AG04450 (cell line): ENCODE measurements at regions of chr17 and their contacts with region 1.

Region 1: GRCh38 chr17:42405963-42406495 is 17.0 kb downstream of the CAVIN1 start:
- DNase-seq: no peak
- H3K4me3 ChIP-seq: no peak overlapping the region
- H3K27ac ChIP-seq: no peak overlapping the region
- H3K27me3 ChIP-seq: no peaks in the 10 kb centered on the region
- CTCF ChIP-seq: peak; percentile 74

Region 2: DNA sequence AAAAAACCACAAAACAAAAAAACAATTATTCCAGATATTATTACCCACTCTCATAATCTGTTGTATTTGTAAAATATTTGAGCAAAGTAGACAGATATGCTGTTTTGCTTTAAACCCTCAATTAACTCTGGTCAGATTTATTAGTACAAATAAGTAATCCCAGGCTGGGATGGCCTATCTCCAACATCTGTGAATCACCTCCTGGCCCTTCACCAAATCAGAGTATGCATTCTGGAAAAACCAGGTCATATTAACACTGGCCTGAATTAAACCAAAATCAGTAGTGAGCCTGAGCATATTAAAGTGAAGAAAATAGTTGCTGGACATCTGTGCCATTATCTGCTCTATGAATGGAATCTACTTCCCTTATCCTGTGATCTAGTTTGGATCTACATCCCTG is 58.8 kb before region 1 on chr17:
- CTCF ChIA-PET with region 1: interaction called, 11 read pairs
- POLR2A ChIA-PET with region 1: no interaction called
- DNase-seq: peak; percentile 60
- H3K4me3 ChIP-seq: no peak overlapping the region
- H3K27ac ChIP-seq: peak overlapping the region; percentile 58
- H3K27me3 ChIP-seq: no peaks in the 10 kb centered on the region
- CTCF ChIP-seq: no peak

Region 3: GRCh38 chr17:42388381-42389134 is 17.5 kb before region 1 on chr17 and contains the start of gene STAT3:
- CTCF ChIA-PET with region 1: interaction called, 8 read pairs
- POLR2A ChIA-PET with region 1: interaction called, 11 read pairs
- DNase-seq: peak; percentile 99
- H3K4me3 ChIP-seq: peak within 1 kb of the TSS; percentile 91
- H3K27ac ChIP-seq: peak within 1 kb of the TSS; percentile 98
- H3K27me3 ChIP-seq: no peaks in the 10 kb centered on the region
- CTCF ChIP-seq: no peak
- polyA plus RNA-seq, gene STAT3: 77.1 and 83.4 TPM in 2 replicates